HepG2 (cell line): ENCODE measurements at regions of chr1 and their contacts with region 1.

Region 1: DNA sequence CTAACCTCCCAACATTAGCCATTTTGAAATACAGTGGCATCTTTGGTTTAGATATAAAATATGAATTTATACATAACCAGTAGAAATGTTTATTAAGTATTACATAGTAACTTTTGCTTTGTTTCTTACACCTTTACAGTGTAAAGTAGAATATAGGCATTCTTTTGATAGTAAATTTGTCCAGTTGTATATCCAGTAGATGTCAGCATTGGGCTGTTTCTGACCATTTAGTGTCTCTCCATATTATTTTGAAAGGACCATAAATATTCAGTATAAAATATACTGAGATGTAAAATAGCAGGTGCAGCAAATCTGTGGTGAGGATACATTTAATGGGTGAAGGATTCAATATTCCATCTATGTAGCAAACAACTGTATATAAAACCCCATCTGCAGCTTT is 115.8 kb upstream of the ZRANB2 start:
- DNase-seq: no peak
- ATAC-seq: no peak
- H3K4me3 ChIP-seq: no peak overlapping the region
- H3K27ac ChIP-seq: no peak overlapping the region
- H3K4me1 ChIP-seq: no peaks in the 10 kb centered on the region
- H3K27me3 ChIP-seq: no peaks in the 10 kb centered on the region
- CTCF ChIP-seq: no peak
- EP300 ChIP-seq: no peak
- POLR2A ChIP-seq: no peak
- RAD21 ChIP-seq: no peak

Region 2: GRCh38 chr1:70382682-70383081 is 814.0 kb before region 1 on chr1:
- CTCF ChIA-PET with region 1: no interaction called
- POLR2A ChIA-PET with region 1: no interaction called
- in situ Hi-C with region 1: no loop called
- intact Hi-C with region 1: no loop called
- DNase-seq: no peak
- ATAC-seq: no peak
- H3K4me3 ChIP-seq: no peak overlapping the region
- H3K27ac ChIP-seq: no peak overlapping the region
- H3K4me1 ChIP-seq: no peaks in the 10 kb centered on the region
- H3K27me3 ChIP-seq: no peaks in the 10 kb centered on the region; a peak in 2 of 5 replicates
- CTCF ChIP-seq: no peak
- EP300 ChIP-seq: no peak
- POLR2A ChIP-seq: no peak
- RAD21 ChIP-seq: no peak

Region 3: GRCh38 chr1:71170925-71171324 is 25.8 kb before region 1 on chr1:
- CTCF ChIA-PET with region 1: no interaction called
- POLR2A ChIA-PET with region 1: no interaction called
- in situ Hi-C with region 1: no loop called
- intact Hi-C with region 1: loop called (anchors 1 kb)
- DNase-seq: no peak
- ATAC-seq: no peak
- H3K4me3 ChIP-seq: no peak overlapping the region
- H3K27ac ChIP-seq: no peak overlapping the region
- H3K4me1 ChIP-seq: no peaks in the 10 kb centered on the region
- H3K27me3 ChIP-seq: no peaks in the 10 kb centered on the region
- CTCF ChIP-seq: no peak
- EP300 ChIP-seq: no peak
- POLR2A ChIP-seq: no peak
- RAD21 ChIP-seq: no peak

Region 4: GRCh38 chr1:71521655-71522264 is 325.1 kb after region 1 on chr1:
- CTCF ChIA-PET with region 1: no interaction called
- POLR2A ChIA-PET with region 1: no interaction called
- in situ Hi-C with region 1: no loop called
- intact Hi-C with region 1: loop called (anchors 5 kb)
- DNase-seq: peak; percentile 2
- ATAC-seq: peak; percentile 48; the same call in 1 of the 3 replicates
- H3K4me3 ChIP-seq: no peak overlapping the region
- H3K27ac ChIP-seq: no peak overlapping the region
- H3K4me1 ChIP-seq: no peaks in the 10 kb centered on the region
- H3K27me3 ChIP-seq: no peaks in the 10 kb centered on the region
- CTCF ChIP-seq: peak; percentile 42
- EP300 ChIP-seq: no peak
- POLR2A ChIP-seq: no peak
- RAD21 ChIP-seq: no peak

Region 5: GRCh38 chr1:72037745-72038343 is 841.2 kb after region 1 on chr1:
- CTCF ChIA-PET with region 1: no interaction called
- POLR2A ChIA-PET with region 1: no interaction called
- in situ Hi-C with region 1: no loop called
- intact Hi-C with region 1: loop called (anchors 5 kb)
- DNase-seq: peak; percentile 25
- ATAC-seq: peak; percentile 44; the same call in 1 of the 3 replicates
- H3K4me3 ChIP-seq: no peak overlapping the region
- H3K27ac ChIP-seq: no peak overlapping the region
- H3K4me1 ChIP-seq: no peaks in the 10 kb centered on the region
- H3K27me3 ChIP-seq: no peaks in the 10 kb centered on the region
- CTCF ChIP-seq: peak; percentile 51
- EP300 ChIP-seq: no peak
- POLR2A ChIP-seq: no peak
- RAD21 ChIP-seq: no peak